ENCODE measurements at regions of chr6 and their contacts with region 1.

Region 1: DNA sequence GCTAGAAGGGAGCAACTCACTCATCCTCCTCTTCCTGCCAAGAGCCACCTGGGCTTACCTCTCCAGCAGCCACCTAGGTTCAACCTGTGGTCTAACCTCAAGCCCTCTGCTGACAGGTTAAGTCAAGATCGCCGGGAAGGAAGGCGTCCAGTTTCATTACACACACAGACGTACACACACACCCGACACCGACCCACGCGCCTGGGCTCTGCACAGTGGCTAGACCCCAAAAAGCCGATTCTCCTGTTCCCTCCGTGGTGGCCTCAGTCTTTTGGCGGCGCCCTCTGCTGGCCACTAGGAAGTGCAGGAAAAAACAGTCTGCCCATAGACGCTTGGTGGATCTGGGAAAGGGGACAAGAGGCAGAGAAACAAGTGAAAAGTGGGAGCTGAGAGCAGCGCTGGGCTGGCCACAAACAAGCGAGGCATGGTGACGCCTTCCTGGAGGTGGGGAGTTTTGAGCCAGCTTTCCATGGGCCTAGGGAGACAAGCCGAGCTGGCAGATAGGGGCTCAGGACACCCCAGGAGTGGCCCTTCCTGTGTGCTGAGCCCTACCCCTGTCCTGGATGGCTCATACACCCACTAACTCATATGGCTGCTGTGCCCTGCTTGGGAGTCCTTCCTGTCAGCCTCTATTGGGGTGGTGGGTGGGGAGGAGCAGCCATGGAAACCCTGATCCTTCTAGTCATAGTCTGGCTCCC is 52.7 kb downstream of the MRPL14 start:
- DNase-seq: peak; percentile 91
- H3K4me3 Mint-ChIP-seq: peak overlapping the region; percentile 93
- H3K27ac Mint-ChIP-seq: peak overlapping the region; percentile 96
- H3K4me1 Mint-ChIP-seq: peaks cover 32% of the 10 kb centered on the region
- H3K27me3 Mint-ChIP-seq: peaks cover 5% of the 10 kb centered on the region

Region 2: GRCh38 chr6:43629505-43630300 is 444.9 kb before region 1 on chr6:
- intact Hi-C with region 1: loop called (anchors 10 kb)
- DNase-seq: peak; percentile 98
- H3K4me3 Mint-ChIP-seq: peak overlapping the region; percentile 99
- H3K27ac Mint-ChIP-seq: peak overlapping the region; percentile 99
- H3K4me1 Mint-ChIP-seq: peaks cover 38% of the 10 kb centered on the region
- H3K27me3 Mint-ChIP-seq: no peaks in the 10 kb centered on the region

Region 3: DNA sequence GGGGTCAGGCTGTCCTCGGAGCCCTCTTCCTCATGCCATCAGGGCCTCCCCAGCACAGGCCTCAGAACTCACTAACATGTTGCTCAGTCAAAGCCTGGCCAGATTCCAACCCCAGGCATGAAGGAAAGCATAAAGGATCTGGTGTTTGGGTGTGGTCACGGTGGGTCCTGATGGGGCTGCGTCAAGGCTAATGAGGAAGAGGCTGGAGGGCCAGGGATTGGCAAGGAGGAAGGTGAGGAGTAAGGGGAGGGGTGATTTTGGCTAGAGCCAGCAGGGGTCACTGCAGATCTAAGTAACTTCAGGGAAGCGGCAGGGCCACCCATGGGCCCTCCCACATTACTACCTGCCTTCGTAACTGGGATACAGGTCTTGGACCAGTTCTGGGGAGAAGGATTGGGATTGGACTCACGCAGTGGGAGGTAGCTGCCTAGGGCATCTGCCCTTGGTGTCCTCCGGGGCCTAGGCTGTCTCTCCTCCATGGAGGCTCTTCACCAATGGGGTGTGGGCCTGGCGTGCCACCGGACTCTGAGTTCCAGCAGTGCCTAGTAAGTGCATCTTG is 350.8 kb before region 1 on chr6:
- intact Hi-C with region 1: loop called (anchors 1 kb)
- DNase-seq: peak; percentile 89
- H3K4me3 Mint-ChIP-seq: no peak overlapping the region
- H3K27ac Mint-ChIP-seq: no peak overlapping the region
- H3K4me1 Mint-ChIP-seq: peaks cover 22% of the 10 kb centered on the region
- H3K27me3 Mint-ChIP-seq: peaks cover 5% of the 10 kb centered on the region

Region 4: GRCh38 chr6:43990627-43991619 is 83.7 kb before region 1 on chr6:
- intact Hi-C with region 1: no loop called
- DNase-seq: no peak
- H3K4me3 Mint-ChIP-seq: no peak overlapping the region
- H3K27ac Mint-ChIP-seq: no peak overlapping the region
- H3K4me1 Mint-ChIP-seq: no peaks in the 10 kb centered on the region
- H3K27me3 Mint-ChIP-seq: peaks cover 5% of the 10 kb centered on the region

Region 5: DNA sequence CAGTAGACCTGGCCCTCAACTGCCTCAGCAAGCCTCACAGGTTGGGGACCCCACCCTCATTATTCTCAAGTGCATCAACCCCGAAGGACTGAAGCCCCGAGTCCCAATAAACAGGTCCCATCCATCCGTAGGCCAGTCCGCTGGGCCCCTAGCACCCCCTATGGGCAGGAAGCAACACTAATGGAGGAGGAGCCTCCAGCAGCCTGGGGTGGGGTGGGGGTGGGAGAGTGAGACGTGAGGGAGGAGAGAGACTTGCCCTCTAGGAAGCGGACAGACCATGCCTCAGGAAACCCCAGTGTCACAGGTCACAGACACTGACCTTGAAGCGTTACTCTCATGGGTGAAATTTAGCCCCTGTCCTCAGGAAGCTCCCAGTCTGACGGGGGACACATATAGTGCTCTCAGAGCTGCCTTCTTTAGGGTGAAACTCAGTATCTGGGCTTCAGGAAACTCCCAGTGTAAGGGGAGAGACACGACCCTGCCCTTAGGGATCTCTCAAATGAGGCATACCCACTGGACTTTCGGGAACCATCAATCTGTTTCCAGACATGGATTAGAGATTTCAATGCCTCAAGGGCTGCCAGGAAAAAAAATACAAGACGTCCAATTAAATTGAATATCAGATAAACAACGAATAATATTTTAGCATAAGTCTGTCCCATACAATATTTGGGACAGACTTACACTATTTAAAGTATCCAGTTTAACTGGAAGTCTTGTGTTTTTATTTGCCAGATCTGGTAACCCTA is 73.1 kb before region 1 on chr6:
- intact Hi-C with region 1: loop called (anchors 2 kb)
- DNase-seq: peak; percentile 67
- H3K4me3 Mint-ChIP-seq: peak overlapping the region; percentile 62
- H3K27ac Mint-ChIP-seq: peak overlapping the region; percentile 37
- H3K4me1 Mint-ChIP-seq: peaks cover 4% of the 10 kb centered on the region
- H3K27me3 Mint-ChIP-seq: peaks cover 27% of the 10 kb centered on the region

Region 6: GRCh38 chr6:44116641-44117382 is 42.2 kb after region 1 on chr6:
- intact Hi-C with region 1: no loop called
- DNase-seq: no peak
- H3K4me3 Mint-ChIP-seq: no peak overlapping the region
- H3K27ac Mint-ChIP-seq: peak overlapping the region; percentile 64
- H3K4me1 Mint-ChIP-seq: peaks cover 43% of the 10 kb centered on the region
- H3K27me3 Mint-ChIP-seq: no peaks in the 10 kb centered on the region

Measured in activated CD4-positive, alpha-beta T cell treated with anti-CD3 and anti-CD28 coated beads, Interleukin-2, amount 10 ng/mL, durations not matched to agents 24 days and 14 days (primary cell).